ENCODE measurements at regions of chr14 and their contacts with region 1.

Region 1: GRCh38 chr14:42224053-42224888 is 617.6 kb downstream of the LRFN5 start:
- DNase-seq: no peak
- ATAC-seq: no peak
- H3K4me3 Mint-ChIP-seq: no peak overlapping the region
- H3K27ac Mint-ChIP-seq: peak overlapping the region; percentile 30
- H3K4me1 Mint-ChIP-seq: peaks cover 22% of the 10 kb centered on the region
- H3K27me3 Mint-ChIP-seq: no peaks in the 10 kb centered on the region
- CTCF ChIP-seq: no peak

Region 2: DNA sequence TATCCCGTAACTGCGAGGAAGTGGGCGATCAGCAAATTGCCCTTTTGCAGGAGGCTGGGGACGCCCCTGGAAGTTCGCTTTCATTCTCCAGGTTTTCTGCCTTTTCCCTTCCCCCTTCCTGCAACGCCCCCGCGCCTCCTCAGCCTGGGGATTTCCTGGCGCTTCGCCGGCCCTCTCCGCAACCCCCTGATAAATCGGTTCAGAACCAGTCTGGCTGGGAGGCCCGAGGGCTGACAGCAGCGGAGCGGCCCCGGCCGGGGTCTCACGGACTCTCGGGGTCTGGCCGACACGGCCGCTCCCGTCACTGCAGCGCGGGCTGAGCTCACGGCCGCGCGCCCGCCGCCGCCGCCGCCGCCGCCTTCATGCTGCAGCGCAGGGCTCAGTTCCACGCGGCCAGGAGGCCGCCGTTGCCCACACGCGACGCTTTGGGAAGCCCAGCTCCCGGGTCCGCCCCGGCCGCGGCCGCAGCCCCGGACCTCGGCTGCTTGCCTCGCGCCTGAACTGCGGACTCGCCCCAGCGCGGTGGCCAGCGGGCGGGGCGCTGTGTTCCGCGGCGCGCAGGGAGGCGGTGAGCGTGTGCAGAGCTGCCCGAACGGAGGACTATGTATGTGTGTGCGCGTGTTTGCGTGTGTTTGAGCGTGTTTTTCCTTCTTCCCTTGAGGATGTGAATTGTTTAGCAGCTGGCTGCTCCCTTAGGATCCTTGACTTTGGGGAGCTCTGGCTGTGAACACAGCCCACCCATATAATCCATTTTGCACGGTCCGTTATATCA is 617.6 kb before region 1 on chr14 and contains the start of gene LRFN5:
- CTCF ChIA-PET with region 1: no interaction called
- POLR2A ChIA-PET with region 1: no interaction called
- intact Hi-C with region 1: loop called (anchors 10 kb)
- DNase-seq: no peak
- ATAC-seq: no peak
- H3K4me3 Mint-ChIP-seq: peak within 1 kb of the TSS; percentile 75
- H3K27ac Mint-ChIP-seq: no peak within 1 kb of the TSS
- H3K4me1 Mint-ChIP-seq: peaks cover 38% of the 10 kb centered on the region
- H3K27me3 Mint-ChIP-seq: peaks cover 59% of the 10 kb centered on the region
- CTCF ChIP-seq: no peak
- total RNA-seq, gene LRFN5: 0.11 TPM in 1 of 2 replicates, not detected in the other

Region 3: GRCh38 chr14:42011221-42011620 is 213.1 kb before region 1 on chr14:
- CTCF ChIA-PET with region 1: no interaction called
- POLR2A ChIA-PET with region 1: no interaction called
- intact Hi-C with region 1: loop called (anchors 1 kb)
- DNase-seq: no peak
- ATAC-seq: peak; percentile 58
- H3K4me3 Mint-ChIP-seq: peak overlapping the region; percentile 13
- H3K27ac Mint-ChIP-seq: peak overlapping the region; percentile 79
- H3K4me1 Mint-ChIP-seq: peaks cover 31% of the 10 kb centered on the region
- H3K27me3 Mint-ChIP-seq: no peaks in the 10 kb centered on the region
- CTCF ChIP-seq: no peak

Region 4: GRCh38 chr14:42299692-42300091 is 75.4 kb after region 1 on chr14:
- CTCF ChIA-PET with region 1: no interaction called
- POLR2A ChIA-PET with region 1: no interaction called
- intact Hi-C with region 1: loop called (anchors 1 kb)
- DNase-seq: no peak
- ATAC-seq: peak; percentile 99
- H3K4me3 Mint-ChIP-seq: peak overlapping the region; percentile 39
- H3K27ac Mint-ChIP-seq: no peak overlapping the region
- H3K4me1 Mint-ChIP-seq: peaks cover 14% of the 10 kb centered on the region
- H3K27me3 Mint-ChIP-seq: no peaks in the 10 kb centered on the region
- CTCF ChIP-seq: no peak

Region 5: DNA sequence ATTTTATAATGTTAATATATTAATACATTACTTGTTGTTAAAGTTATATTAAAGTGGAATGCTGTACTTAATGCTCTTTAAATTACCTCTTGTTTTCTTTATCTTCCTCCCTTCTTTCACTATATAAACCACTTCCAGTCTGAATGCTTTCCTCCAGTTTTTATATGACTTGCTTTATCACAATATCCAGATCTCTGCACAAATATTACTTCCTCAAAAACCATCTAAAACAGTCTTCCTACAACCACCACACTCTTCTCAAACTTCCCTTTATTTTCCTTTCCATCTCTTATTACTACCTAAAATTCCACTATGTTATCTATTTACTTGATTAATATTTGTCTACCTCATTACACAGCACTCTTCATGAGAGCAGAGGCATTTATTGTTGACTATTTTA is 339.0 kb after region 1 on chr14:
- CTCF ChIA-PET with region 1: interaction called, 3 read pairs
- POLR2A ChIA-PET with region 1: no interaction called
- intact Hi-C with region 1: loop called (anchors 10 kb)
- DNase-seq: no peak
- ATAC-seq: no peak
- H3K4me3 Mint-ChIP-seq: no peak overlapping the region
- H3K27ac Mint-ChIP-seq: no peak overlapping the region
- H3K4me1 Mint-ChIP-seq: no peaks in the 10 kb centered on the region
- H3K27me3 Mint-ChIP-seq: no peaks in the 10 kb centered on the region
- CTCF ChIP-seq: no peak